Natural killer cell (primary cell): ENCODE measurements at regions of chr10 and their contacts with region 1.

Region 1: GRCh38 chr10:329361-330099 is 194.3 kb downstream of the ZMYND11 start:
- DNase-seq: peak in 1 of 2 donors; percentile 29
- ATAC-seq: no peak
- H3K4me3 ChIP-seq: no peak overlapping the region
- H3K4me3 Mint-ChIP-seq: peak overlapping the region; percentile 9
- H3K27ac ChIP-seq: no peak overlapping the region
- H3K27ac Mint-ChIP-seq: peak overlapping the region in 1 of 2 donors; percentile 59
- H3K4me1 ChIP-seq: peaks cover 26% of the 10 kb centered on the region
- H3K4me1 Mint-ChIP-seq: peaks cover 39 to 50% of the 10 kb centered on the region in 2 donors
- H3K27me3 ChIP-seq: no peaks in the 10 kb centered on the region
- H3K27me3 Mint-ChIP-seq: no peaks in the 10 kb centered on the region
- CTCF ChIP-seq: no peak

Region 2: GRCh38 chr10:248307-248706 is 81.2 kb before region 1 on chr10:
- intact Hi-C with region 1: loop called (anchors 5 kb)
- DNase-seq: peak in 1 of 2 donors; percentile 34
- ATAC-seq: no peak
- H3K4me3 ChIP-seq: no peak overlapping the region
- H3K4me3 Mint-ChIP-seq: no peak overlapping the region
- H3K27ac ChIP-seq: no peak overlapping the region
- H3K27ac Mint-ChIP-seq: no peak overlapping the region
- H3K4me1 ChIP-seq: no peaks in the 10 kb centered on the region
- H3K4me1 Mint-ChIP-seq: peaks cover 18 to 23% of the 10 kb centered on the region in 2 donors
- H3K27me3 ChIP-seq: no peaks in the 10 kb centered on the region
- H3K27me3 Mint-ChIP-seq: no peaks in the 10 kb centered on the region
- CTCF ChIP-seq: no peak

Region 3: DNA sequence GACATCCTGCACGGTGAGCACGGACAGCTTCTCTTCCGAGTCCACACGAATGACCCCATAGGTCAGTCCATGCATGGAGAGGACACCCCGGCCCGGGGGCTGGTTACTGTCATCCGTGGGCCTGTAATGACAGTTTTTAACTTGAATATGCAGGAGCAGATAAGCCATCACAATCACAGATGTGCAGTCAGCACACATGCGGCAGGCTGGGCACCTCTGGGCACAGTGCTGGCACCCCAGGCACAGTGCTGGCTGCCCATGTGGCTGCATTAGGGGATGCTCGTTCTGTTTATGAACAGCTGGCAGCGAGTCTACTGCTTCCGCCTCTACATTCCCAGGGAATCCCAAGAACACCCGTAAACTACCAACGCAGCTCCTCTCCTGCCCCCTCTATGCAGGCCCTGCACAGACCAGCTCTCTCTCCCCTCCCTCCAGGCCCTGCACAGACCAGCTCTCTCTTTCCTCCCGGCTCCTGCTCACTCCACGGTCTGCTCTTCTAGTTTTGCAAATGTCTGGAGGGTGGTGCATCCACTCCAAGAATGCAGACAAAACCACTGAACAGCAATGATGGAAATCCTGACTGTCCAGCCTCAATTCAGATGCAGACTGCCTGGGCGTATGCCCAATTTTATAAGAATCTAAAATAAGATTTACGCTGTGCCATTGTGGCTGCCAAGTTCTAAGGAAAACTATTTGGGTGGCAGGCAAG is 40.1 kb after region 1 on chr10:
- intact Hi-C with region 1: no loop called
- DNase-seq: no peak
- ATAC-seq: no peak
- H3K4me3 ChIP-seq: no peak overlapping the region
- H3K4me3 Mint-ChIP-seq: no peak overlapping the region
- H3K27ac ChIP-seq: no peak overlapping the region
- H3K27ac Mint-ChIP-seq: no peak overlapping the region
- H3K4me1 ChIP-seq: no peaks in the 10 kb centered on the region
- H3K4me1 Mint-ChIP-seq: no peaks in the 10 kb centered on the region
- H3K27me3 ChIP-seq: no peaks in the 10 kb centered on the region
- H3K27me3 Mint-ChIP-seq: peaks cover 0 to 10% of the 10 kb centered on the region in 2 donors
- CTCF ChIP-seq: no peak

Region 4: GRCh38 chr10:380313-380955 is 50.9 kb after region 1 on chr10:
- intact Hi-C with region 1: loop called (anchors 2 kb)
- DNase-seq: no peak
- ATAC-seq: no peak
- H3K4me3 ChIP-seq: no peak overlapping the region
- H3K4me3 Mint-ChIP-seq: no peak overlapping the region
- H3K27ac ChIP-seq: no peak overlapping the region
- H3K27ac Mint-ChIP-seq: no peak overlapping the region
- H3K4me1 ChIP-seq: peaks cover 23% of the 10 kb centered on the region
- H3K4me1 Mint-ChIP-seq: peaks cover 36 to 42% of the 10 kb centered on the region in 2 donors
- H3K27me3 ChIP-seq: no peaks in the 10 kb centered on the region
- H3K27me3 Mint-ChIP-seq: peaks cover 30 to 35% of the 10 kb centered on the region in 2 donors
- CTCF ChIP-seq: no peak

Region 5: DNA sequence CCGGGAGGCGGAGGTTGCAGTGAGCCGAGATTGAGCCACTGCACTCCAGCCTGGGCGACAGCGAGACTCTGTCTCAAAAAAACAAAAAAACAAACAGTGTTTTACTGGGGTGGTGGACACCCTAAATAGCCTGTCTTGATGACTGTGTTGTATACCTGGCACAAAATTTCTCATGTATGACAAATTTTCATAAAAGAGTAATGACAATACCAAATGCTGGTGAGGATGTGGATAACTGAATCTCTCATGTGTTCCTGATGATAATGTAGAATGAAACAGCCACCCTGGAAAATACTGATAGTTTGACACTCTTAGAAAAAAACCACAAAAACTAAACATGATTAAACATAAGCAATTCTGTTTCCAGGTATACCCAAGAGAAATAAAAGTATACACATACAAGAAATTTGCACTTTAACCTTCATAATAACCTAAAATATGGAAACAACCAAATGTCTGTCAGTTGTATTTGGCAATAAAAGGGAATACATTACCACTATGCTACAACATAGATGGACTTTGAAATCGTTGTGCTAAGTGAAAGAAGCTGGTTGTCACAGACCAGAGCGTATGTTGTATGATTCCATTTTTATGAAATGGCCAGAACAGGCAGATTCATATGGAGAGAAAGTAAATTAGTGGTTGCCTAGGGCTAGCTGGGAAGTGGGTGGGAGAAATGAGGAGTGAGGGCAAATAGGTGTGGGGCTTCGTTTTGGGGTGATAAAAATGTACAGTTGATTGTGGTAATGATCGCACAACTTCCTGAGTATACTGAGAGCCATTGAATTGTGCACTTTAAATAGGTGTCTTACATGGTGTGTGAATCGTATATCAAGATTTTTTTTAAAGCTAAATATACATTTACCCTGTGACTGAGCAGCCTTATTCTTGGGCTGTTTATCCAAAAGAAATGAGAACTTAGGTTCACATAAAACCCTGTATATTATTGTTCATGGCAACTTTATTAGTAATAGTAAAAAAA is 739.1 kb after region 1 on chr10:
- intact Hi-C with region 1: loop called (anchors 5 kb)
- DNase-seq: no peak
- ATAC-seq: peak; percentile 56 to 61 (median 56)
- H3K4me3 ChIP-seq: no peak overlapping the region
- H3K4me3 Mint-ChIP-seq: peak overlapping the region; percentile 75
- H3K27ac ChIP-seq: peak overlapping the region; percentile 41
- H3K27ac Mint-ChIP-seq: peak overlapping the region; percentile 84 to 89
- H3K4me1 ChIP-seq: peaks cover 32% of the 10 kb centered on the region
- H3K4me1 Mint-ChIP-seq: peaks cover 67 to 72% of the 10 kb centered on the region in 2 donors
- H3K27me3 ChIP-seq: no peaks in the 10 kb centered on the region
- H3K27me3 Mint-ChIP-seq: no peaks in the 10 kb centered on the region
- CTCF ChIP-seq: no peak